ENCODE measurements at regions of chr10 and their contacts with region 1.

Region 1: DNA sequence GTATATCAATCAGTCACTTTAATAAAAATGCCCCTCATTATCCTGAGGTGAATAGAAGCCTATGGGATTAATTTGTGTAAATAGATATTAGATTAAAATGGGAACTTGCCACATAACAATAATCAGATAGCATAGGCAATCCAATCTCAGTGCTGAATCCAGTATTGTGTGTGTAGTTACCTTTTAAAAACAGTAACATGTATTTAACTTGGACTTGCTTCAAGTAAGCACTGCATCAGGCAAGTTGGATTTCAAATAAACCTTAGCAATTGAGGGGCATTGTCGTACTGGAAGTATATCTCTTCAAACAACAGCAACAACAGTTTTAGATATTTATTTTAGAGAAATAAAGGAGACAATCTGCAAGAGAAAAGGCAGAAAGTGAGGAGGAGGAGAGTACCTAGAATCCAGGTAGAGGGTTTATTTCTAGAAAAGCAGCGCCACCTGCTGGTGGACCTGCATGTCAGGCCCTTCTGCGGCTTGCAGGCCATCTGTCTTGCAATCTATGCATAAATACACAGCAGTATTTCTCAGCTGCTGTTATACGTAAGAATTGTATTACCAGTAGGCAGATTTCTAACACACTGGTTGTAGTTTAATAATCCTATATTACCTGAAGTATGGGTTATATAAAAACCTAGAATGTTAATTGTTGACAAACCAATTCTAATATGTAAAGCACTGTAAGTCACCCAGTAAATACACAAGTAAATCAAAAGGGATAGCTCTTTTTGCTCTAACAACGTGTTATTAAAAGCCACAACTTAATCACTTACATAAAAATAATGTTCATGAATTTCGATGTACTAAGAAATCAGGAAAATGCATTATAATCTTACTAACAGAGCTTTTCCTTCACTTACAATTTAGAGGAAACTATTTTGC is 652.8 kb downstream of the KCNMA1 start:
- DNase-seq: peak; percentile 59
- H3K4me3 ChIP-seq: no peak overlapping the region
- H3K27ac ChIP-seq: no peak overlapping the region
- H3K27me3 ChIP-seq: no peaks in the 10 kb centered on the region
- CTCF ChIP-seq: peak; percentile 96

Region 2: DNA sequence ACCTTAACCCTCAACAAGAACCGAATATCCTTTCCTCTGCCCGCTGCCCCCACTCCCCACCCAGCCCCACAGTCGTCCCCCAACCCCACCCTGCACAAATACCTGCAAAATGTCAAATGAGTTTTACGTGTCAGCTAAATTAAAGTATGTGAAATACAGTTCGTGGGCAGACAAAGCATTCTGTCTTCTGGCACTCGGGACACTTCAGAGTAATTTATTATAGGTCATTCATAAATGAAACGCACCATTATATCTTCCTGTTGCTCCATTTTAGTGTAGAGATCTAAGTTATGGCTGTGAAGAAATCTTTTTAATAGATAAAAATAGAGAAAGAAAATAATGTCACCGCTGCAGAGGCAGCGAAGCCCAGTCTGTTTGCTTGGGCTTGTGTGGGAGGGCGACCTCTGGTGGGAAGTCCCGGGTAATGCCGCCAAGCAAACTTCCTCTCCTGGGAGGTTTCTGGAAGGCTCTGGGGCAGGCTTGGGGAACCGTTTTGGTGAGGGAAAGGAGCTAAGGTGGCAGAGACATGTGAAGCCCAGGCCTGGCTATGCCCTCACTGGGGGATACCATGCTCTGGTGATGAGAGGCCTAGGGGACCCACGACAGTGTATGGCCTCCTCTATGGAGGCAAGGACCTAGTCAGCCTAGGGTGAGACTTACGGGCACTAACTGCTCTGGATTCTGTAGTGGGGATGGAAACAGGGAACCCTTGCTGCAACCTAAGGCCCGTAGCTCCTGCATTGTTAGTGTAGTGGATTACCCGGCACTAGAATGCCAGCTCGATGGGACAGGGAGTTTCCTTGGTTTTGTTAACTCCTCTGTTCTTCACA is 948.5 kb before region 1 on chr10:
- CTCF ChIA-PET with region 1: interaction called, 13 read pairs
- POLR2A ChIA-PET with region 1: no interaction called
- DNase-seq: peak; percentile 32
- H3K4me3 ChIP-seq: no peak overlapping the region
- H3K27ac ChIP-seq: no peak overlapping the region
- H3K27me3 ChIP-seq: peaks cover 7% of the 10 kb centered on the region
- CTCF ChIP-seq: peak; percentile 97

Region 3: DNA sequence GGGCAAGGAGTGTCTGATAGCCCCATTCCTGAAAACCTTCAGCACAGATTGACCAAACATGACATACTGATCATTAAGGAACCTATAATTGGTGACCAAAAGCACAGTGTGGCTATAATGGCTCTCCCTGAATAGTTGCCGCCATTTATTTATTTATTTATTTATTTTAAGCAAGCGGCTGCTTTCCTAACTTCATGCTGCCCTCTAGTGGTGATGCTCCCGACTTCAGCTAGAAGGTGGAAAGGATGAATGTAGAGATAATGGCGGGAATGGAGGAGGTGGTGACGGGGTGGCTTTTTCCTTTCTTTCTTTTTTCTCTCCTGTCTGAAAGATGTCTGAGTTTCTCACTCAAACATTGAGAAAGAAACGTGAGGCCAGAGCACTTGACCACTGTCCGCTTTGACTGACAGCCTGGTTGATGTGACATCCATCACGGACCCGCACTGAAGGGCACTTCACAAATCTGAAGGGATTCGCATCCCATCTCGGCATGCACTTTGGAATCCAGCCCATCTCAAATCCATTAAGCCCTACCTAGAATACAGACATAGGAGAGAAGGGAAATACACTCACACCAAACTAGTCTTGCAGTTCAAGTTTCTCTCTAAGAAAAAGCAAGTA is 437.3 kb before region 1 on chr10:
- CTCF ChIA-PET with region 1: interaction called, 10 read pairs
- POLR2A ChIA-PET with region 1: no interaction called
- DNase-seq: peak; percentile 59
- H3K4me3 ChIP-seq: no peak overlapping the region
- H3K27ac ChIP-seq: no peak overlapping the region
- H3K27me3 ChIP-seq: no peaks in the 10 kb centered on the region
- CTCF ChIP-seq: peak; percentile 85

Region 4: GRCh38 chr10:76973515-76974278 is 11.1 kb before region 1 on chr10:
- CTCF ChIA-PET with region 1: interaction called, 30 read pairs
- POLR2A ChIA-PET with region 1: no interaction called
- DNase-seq: peak; percentile 7
- H3K4me3 ChIP-seq: no peak overlapping the region
- H3K27ac ChIP-seq: no peak overlapping the region
- H3K27me3 ChIP-seq: no peaks in the 10 kb centered on the region
- CTCF ChIP-seq: no peak

Region 5: GRCh38 chr10:76997631-76998030 is 12.8 kb after region 1 on chr10:
- CTCF ChIA-PET with region 1: interaction called, 18 read pairs
- POLR2A ChIA-PET with region 1: no interaction called
- DNase-seq: no peak
- H3K4me3 ChIP-seq: no peak overlapping the region
- H3K27ac ChIP-seq: no peak overlapping the region
- H3K27me3 ChIP-seq: no peaks in the 10 kb centered on the region
- CTCF ChIP-seq: no peak